GM12878 (cell line): ENCODE measurements at regions of chr11 and their contacts with region 1.

Region 1: GRCh38 chr11:36564376-36565030 is 3.3 kb upstream of the RAG1 start:
- DNase-seq: peak; percentile 20
- ATAC-seq: peak; percentile 82
- H3K4me3 ChIP-seq: no peak overlapping the region
- H3K27ac ChIP-seq: no peak overlapping the region
- H3K4me1 ChIP-seq: no peaks in the 10 kb centered on the region
- H3K27me3 ChIP-seq: peaks cover 0 to 8% of the 10 kb centered on the region in 2 experiments; a peak in 1 of 4 replicates
- CTCF ChIP-seq: peak; percentile 43 to 73 (median 55); a peak in 5 of 6 replicates
- EP300 ChIP-seq: no peak
- POLR2A ChIP-seq: no peak
- RAD21 ChIP-seq: peak; percentile 89

Region 2: DNA sequence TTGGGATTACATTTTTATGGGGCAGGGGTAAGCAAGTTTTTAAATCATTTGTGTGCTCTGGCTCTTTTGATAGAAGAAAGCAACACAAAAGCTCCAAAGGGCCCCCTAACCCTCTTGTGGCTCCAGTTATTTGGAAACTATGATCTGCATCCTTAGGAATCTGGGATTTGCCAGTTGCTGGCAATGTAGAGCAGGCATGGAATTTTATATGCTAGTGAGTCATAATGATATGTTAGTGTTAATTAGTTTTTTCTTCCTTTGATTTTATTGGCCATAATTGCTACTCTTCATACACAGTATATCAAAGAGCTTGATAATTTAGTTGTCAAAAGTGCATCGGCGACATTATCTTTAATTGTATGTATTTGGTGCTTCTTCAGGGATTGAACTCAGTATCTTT is 13.4 kb after region 1 on chr11:
- CTCF ChIA-PET with region 1: interaction called, 21 read pairs
- POLR2A ChIA-PET with region 1: no interaction called
- RAD21 ChIA-PET with region 1: no interaction called
- SMC1A ChIA-PET with region 1: interaction called, 4 read pairs
- in situ Hi-C with region 1: no loop called
- intact Hi-C with region 1: no loop called
- DNase-seq: no peak
- ATAC-seq: no peak
- H3K4me3 ChIP-seq: no peak overlapping the region
- H3K27ac ChIP-seq: no peak overlapping the region
- H3K4me1 ChIP-seq: no peaks in the 10 kb centered on the region
- H3K27me3 ChIP-seq: peaks cover 2 to 5% of the 10 kb centered on the region in 2 experiments
- CTCF ChIP-seq: no peak
- EP300 ChIP-seq: no peak
- POLR2A ChIP-seq: no peak
- RAD21 ChIP-seq: no peak

Region 3: GRCh38 chr11:36622431-36623136 is 58.1 kb after region 1 on chr11:
- CTCF ChIA-PET with region 1: interaction called, 9 read pairs
- POLR2A ChIA-PET with region 1: no interaction called
- RAD21 ChIA-PET with region 1: no interaction called
- SMC1A ChIA-PET with region 1: no interaction called
- in situ Hi-C with region 1: no loop called
- intact Hi-C with region 1: loop called (anchors 2 kb)
- DNase-seq: no peak
- ATAC-seq: peak; percentile 66
- H3K4me3 ChIP-seq: no peak overlapping the region
- H3K27ac ChIP-seq: no peak overlapping the region
- H3K4me1 ChIP-seq: no peaks in the 10 kb centered on the region
- H3K27me3 ChIP-seq: peaks cover 0 to 3% of the 10 kb centered on the region in 2 experiments; a peak in 2 of 4 replicates
- CTCF ChIP-seq: peak; percentile 42 to 57 (median 48); a peak in 4 of 6 replicates
- EP300 ChIP-seq: no peak
- POLR2A ChIP-seq: no peak
- RAD21 ChIP-seq: peak; percentile 59

Region 4: DNA sequence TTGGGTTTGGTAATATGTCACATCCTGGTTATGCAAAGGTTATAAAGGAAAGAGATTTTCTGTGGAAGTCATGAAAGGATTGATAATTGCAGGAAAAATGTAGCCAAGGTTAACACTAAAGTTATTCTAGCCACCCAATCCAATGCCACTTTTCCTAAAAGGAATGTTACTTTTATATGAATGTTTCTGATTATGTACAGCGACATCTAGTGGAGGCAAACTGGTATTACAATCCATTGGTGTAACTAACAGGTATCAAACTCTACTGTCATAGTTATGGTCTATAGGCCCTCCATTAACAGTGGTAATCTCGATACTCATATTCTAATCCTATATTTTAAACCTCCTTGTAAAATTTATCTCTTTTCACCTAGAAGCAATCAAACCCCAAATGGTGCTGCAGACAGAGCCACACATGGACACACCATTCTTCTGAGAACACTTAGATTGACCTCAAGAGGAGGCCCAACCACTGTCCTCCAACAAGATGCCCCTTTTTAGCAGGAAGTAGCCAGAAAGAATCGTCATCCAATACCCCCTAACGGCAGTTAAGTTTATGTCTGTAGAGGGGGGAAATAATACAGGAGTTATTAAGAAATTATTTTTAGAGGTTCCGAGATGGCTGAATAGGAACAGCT is 108.4 kb after region 1 on chr11:
- CTCF ChIA-PET with region 1: interaction called, 72 read pairs
- POLR2A ChIA-PET with region 1: no interaction called
- RAD21 ChIA-PET with region 1: interaction called, 13 read pairs
- SMC1A ChIA-PET with region 1: interaction called, 20 read pairs
- in situ Hi-C with region 1: loop called (anchors 5 kb)
- intact Hi-C with region 1: loop called (anchors 1 kb)
- DNase-seq: no peak
- ATAC-seq: peak; percentile 63
- H3K4me3 ChIP-seq: no peak overlapping the region
- H3K27ac ChIP-seq: no peak overlapping the region
- H3K4me1 ChIP-seq: no peaks in the 10 kb centered on the region
- H3K27me3 ChIP-seq: no peaks in the 10 kb centered on the region
- CTCF ChIP-seq: peak; percentile 54 to 66 (median 62)
- EP300 ChIP-seq: no peak
- POLR2A ChIP-seq: no peak
- RAD21 ChIP-seq: peak; percentile 49

Region 5: DNA sequence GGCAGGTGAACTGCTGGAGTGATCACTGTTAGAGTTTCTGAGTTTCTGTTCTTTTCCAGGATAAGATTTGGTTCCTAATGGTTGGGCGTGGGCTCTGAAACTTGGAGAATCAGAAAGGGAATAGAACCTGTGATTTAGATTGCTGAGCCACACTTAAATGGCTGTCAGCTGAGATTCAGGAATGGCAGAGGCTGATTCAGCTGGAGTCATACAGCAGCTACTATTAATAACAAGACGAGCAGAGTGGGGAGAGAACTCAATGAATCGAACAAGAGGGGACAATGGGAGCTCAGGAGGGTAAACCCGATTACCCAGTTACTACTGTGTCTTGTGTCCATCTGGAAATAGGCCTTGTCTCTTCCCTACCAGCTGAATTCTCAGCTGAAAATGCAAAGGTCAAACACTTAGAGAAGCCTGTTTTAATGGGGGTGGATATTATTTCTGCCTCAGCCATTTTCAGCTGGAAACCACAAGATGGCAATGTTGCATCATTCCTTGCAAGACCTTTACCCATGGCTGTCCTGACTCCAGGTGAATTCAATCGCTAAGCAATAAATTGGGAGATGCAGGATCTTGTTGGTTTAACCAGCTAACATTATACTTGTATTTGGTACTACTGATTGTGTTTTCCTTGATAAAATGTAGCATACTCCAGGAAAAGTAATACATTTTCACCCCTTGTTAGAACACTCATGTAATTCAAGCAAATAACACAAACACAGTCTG is 138.0 kb after region 1 on chr11:
- CTCF ChIA-PET with region 1: interaction called, 14 read pairs
- POLR2A ChIA-PET with region 1: no interaction called
- RAD21 ChIA-PET with region 1: interaction called, 7 read pairs
- SMC1A ChIA-PET with region 1: interaction called, 6 read pairs
- in situ Hi-C with region 1: no loop called
- intact Hi-C with region 1: no loop called
- DNase-seq: peak; percentile 41
- ATAC-seq: peak; percentile 94
- H3K4me3 ChIP-seq: no peak overlapping the region
- H3K27ac ChIP-seq: no peak overlapping the region
- H3K4me1 ChIP-seq: peaks cover 5% of the 10 kb centered on the region; the same call in 1 of the 2 replicates
- H3K27me3 ChIP-seq: no peaks in the 10 kb centered on the region
- CTCF ChIP-seq: peak; percentile 72 to 96 (median 90)
- EP300 ChIP-seq: no peak
- POLR2A ChIP-seq: no peak
- RAD21 ChIP-seq: peak; percentile 97